K562 (cell line): ENCODE measurements at regions of chr4 and their contacts with region 1.

Region 1: DNA sequence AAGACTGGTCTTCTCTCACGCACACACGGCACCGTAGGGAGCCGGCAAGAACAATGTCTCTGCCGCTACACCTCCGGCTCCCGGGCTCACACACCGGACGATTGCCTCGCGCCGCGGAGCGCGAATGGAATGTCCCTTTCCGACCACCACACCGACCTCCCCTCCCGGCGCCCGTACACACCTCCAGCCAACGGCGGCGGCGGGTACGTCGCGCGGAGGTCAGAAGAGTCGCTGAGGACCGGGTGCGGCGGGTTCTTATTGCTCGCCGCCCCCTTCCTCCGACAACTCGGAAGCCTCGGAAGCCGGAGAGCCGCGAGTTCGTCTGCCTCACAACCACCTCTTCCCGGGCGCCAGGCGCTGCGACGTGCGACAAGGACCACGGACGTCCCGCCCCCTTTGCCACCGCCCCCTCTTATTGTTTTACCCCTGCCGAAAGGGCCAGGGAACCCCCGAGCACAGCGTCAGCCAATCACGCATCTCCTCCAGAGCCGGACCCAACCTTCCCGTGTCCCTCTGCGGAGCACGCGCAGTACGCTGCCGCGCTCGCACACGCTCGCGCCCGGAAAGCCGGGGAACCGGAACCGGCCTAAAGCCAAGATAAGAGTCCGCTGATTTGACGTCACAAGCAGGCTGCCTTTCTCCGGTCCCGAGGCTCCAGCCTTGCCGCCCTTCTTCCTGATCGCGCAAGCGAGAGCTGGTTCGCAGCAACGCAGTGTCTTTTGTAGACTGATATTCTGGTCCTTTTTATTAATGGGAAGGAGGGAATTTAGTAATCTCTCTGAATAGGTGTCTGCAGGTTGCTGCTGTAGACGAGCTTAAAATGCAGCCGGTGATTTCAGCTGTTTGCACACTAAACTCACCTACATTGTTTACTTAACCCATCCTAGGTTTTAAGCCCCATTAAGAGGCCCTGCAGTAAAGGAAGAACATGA is at the start of gene G3BP2:
- DNase-seq: peak; percentile 98 to 99 (median 98)
- ATAC-seq: peak; percentile 94
- H3K4me3 ChIP-seq: peak within 1 kb of the TSS; percentile 94
- H3K27ac ChIP-seq: peak within 1 kb of the TSS; percentile 99
- H3K4me1 ChIP-seq: peaks cover 0 to 30% of the 10 kb centered on the region in 2 experiments; a peak in 3 of 5 replicates
- H3K27me3 ChIP-seq: no peaks in the 10 kb centered on the region
- CTCF ChIP-seq: 0 out of 6 replicates have a peak, but pooled peaks of 2 of the 3 experiments have one; percentile 1
- EP300 ChIP-seq: peak; percentile 56
- POLR2A ChIP-seq: peak; percentile 94
- RAD21 ChIP-seq: no peak
- polyA plus RNA-seq, gene G3BP2: 25.2 to 36.2 TPM

Region 2: GRCh38 chr4:75514131-75514948 is 159.0 kb before region 1 on chr4 and contains the starts of genes RCHY1 and THAP6:
- CTCF ChIA-PET with region 1: no interaction called
- POLR2A ChIA-PET with region 1: interaction called, 3 read pairs
- in situ Hi-C with region 1: no loop called
- intact Hi-C with region 1: loop called (anchors 2 kb)
- DNase-seq: peak; percentile 84 to 98 (median 88)
- ATAC-seq: peak; percentile 93
- H3K4me3 ChIP-seq: peak within 1 kb of the TSS; percentile 56
- H3K27ac ChIP-seq: peak within 1 kb of the TSS; percentile 95
- H3K4me1 ChIP-seq: peaks cover 0 to 16% of the 10 kb centered on the region in 2 experiments; a peak in 4 of 5 replicates
- H3K27me3 ChIP-seq: no peaks in the 10 kb centered on the region
- CTCF ChIP-seq: 0 out of 6 replicates have a peak, but pooled peaks of 1 of the 3 experiments have one; percentile 9
- EP300 ChIP-seq: no peak
- POLR2A ChIP-seq: peak; percentile 97
- RAD21 ChIP-seq: no peak
- polyA plus RNA-seq, gene RCHY1: 71.2 to 85.1 TPM
- polyA plus RNA-seq, gene THAP6: 16.3 to 20.1 TPM

Region 3: GRCh38 chr4:75653845-75654503 is 19.3 kb before region 1 on chr4:
- CTCF ChIA-PET with region 1: no interaction called
- POLR2A ChIA-PET with region 1: interaction called, 12 read pairs
- in situ Hi-C with region 1: no loop called
- intact Hi-C with region 1: no loop called
- DNase-seq: peak in 1 of 4 experiments; percentile 21
- ATAC-seq: peak; percentile 71
- H3K4me3 ChIP-seq: no peak overlapping the region
- H3K27ac ChIP-seq: no peak overlapping the region
- H3K4me1 ChIP-seq: no peaks in the 10 kb centered on the region
- H3K27me3 ChIP-seq: no peaks in the 10 kb centered on the region
- CTCF ChIP-seq: peak; percentile 34 to 61 (median 38); a peak in 4 of 6 replicates
- EP300 ChIP-seq: no peak
- POLR2A ChIP-seq: no peak
- RAD21 ChIP-seq: peak in 1 of 2 experiments; percentile 58; a peak in 2 of 4 replicates